ENCODE measurements at regions of chr3 and their contacts with region 1.

Region 1: GRCh38 chr3:45656575-45657363 is 32.4 kb upstream of the SACM1L start:
- DNase-seq: peak; percentile 86 to 96 (median 88)
- ATAC-seq: peak; percentile 95
- H3K4me3 ChIP-seq: no peak overlapping the region
- H3K27ac ChIP-seq: no peak overlapping the region
- H3K4me1 ChIP-seq: 0 out of 5 replicates have a peak, but pooled peaks cover 0 to 3% of the 10 kb centered on the region in 2 experiments
- H3K27me3 ChIP-seq: no peaks in the 10 kb centered on the region
- CTCF ChIP-seq: peak; percentile 96 to 99 (median 98)
- EP300 ChIP-seq: no peak
- POLR2A ChIP-seq: no peak
- RAD21 ChIP-seq: peak; percentile 96 to 98

Region 2: DNA sequence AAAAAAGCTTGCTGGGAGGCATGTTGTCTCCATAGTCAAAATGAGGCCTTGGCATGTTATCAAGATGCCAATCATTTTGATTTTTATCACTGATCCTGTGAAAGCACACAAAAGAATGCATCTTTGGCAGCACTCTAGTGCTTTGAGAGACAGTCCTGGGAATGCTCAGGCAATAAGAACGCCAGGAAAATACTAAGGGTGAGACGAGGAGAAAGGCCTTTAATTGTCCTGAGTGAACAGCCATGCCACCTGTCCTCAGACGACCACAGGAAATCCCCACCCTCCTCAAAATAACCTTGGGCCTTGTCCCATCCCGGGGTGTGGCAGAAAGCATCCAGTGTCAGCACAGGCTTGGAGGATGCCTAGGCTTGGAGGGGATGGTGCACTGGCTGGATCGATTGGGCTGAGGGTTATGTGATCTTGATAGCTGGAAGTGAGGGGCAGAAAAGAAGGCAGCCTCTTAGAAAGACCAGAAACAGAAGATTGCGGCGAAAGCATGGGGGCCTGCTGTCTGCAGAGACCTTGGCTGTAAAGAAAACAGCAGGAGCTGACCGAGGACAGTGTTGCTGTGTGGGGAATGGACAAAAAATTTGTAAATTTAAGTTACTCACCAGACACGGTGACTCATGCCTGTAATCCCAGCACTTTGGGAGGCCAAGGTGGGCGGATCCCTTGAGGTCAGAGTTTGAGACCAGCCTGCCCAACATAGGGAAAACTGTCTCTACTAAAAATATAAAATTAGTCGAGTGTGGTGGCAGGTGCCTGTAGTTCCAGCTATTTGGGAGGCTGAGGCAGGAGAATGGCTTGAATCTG is 438.0 kb before region 1 on chr3:
- CTCF ChIA-PET with region 1: no interaction called
- POLR2A ChIA-PET with region 1: no interaction called
- in situ Hi-C with region 1: loop called (anchors 5 kb)
- intact Hi-C with region 1: no loop called
- DNase-seq: peak in 2 of 4 experiments; percentile 44 to 71
- ATAC-seq: peak; percentile 66
- H3K4me3 ChIP-seq: no peak overlapping the region
- H3K27ac ChIP-seq: no peak overlapping the region
- H3K4me1 ChIP-seq: peaks cover 4 to 11% of the 10 kb centered on the region in 2 experiments; a peak in 3 of 5 replicates
- H3K27me3 ChIP-seq: no peaks in the 10 kb centered on the region
- CTCF ChIP-seq: no peak
- EP300 ChIP-seq: no peak
- POLR2A ChIP-seq: no peak
- RAD21 ChIP-seq: no peak

Region 3: DNA sequence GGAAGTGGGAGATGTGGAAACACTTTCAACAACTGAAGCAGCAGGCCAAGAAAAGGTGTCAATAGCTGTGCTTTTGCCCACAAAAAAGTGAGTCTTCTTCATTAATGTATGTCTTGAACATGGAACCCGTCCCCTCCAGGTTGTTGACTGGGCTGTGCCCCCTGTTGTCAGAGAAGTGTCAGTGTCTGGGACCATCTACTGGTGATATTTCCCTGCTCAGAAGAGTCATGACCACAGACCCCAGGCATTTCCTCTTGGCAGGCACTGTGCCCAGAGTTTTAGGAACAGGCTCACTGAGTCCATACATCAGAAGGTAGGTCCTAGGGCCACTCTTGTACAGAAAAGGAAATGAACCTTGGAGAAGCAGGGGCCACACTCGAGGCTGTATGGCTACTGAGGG is 323.2 kb before region 1 on chr3:
- CTCF ChIA-PET with region 1: no interaction called
- POLR2A ChIA-PET with region 1: interaction called, 3 read pairs
- in situ Hi-C with region 1: no loop called
- intact Hi-C with region 1: loop called (anchors 10 kb)
- DNase-seq: peak in 2 of 4 experiments; percentile 41 to 49
- ATAC-seq: peak; percentile 81
- H3K4me3 ChIP-seq: no peak overlapping the region
- H3K27ac ChIP-seq: no peak overlapping the region
- H3K4me1 ChIP-seq: peaks cover 0 to 2% of the 10 kb centered on the region in 2 experiments; a peak in 2 of 5 replicates
- H3K27me3 ChIP-seq: peaks cover 47 to 72% of the 10 kb centered on the region in 2 experiments
- CTCF ChIP-seq: peak; percentile 49 to 62 (median 55)
- EP300 ChIP-seq: no peak
- POLR2A ChIP-seq: no peak
- RAD21 ChIP-seq: peak; percentile 24 to 63; a peak in 2 of 4 replicates

Region 4: GRCh38 chr3:45546716-45547701 is 109.8 kb before region 1 on chr3:
- CTCF ChIA-PET with region 1: interaction called, 3 read pairs
- POLR2A ChIA-PET with region 1: interaction called, 4 read pairs
- in situ Hi-C with region 1: no loop called
- intact Hi-C with region 1: loop called (anchors 2 kb)
- DNase-seq: peak; percentile 74 to 86 (median 78)
- ATAC-seq: peak; percentile 52
- H3K4me3 ChIP-seq: no peak overlapping the region
- H3K27ac ChIP-seq: peak overlapping the region; percentile 74; the same call in 2 of the 3 replicates
- H3K4me1 ChIP-seq: peaks cover 25 to 51% of the 10 kb centered on the region in 2 experiments
- H3K27me3 ChIP-seq: no peaks in the 10 kb centered on the region
- CTCF ChIP-seq: peak; percentile 75 to 92 (median 85)
- EP300 ChIP-seq: no peak
- POLR2A ChIP-seq: no peak
- RAD21 ChIP-seq: peak in 1 of 2 experiments; percentile 66; a peak in 2 of 4 replicates

Region 5: DNA sequence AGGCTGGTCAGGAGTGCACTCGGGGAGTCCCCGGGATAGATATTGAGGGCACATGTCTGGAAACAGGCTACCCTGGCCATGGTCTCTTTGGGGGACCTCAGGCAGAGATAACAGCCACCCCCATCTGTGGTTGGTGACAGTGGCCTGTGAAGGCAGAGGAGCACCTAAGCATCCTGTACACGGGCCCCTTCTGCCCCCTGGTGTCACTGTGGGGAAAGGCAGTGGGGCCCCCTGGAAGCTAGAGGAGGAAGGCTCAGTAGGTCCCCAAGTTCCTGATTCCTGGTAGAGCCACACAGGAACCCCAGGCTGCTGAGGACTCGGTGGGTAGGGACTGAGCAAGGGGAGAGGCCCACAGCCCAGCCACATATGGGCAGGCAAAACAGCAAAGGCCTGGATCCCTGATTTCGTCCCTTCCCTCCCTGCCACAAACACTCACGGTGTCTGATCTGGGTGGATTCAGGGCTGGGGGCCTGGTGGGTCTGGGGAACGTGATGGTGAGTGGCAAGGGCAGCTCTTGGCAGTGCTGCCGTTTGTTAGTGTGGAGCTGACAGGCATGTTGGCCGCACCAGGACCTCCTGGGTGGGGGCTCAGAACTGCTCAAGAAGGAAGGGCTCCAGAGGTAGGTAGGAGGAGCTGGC is 272.4 kb after region 1 on chr3:
- CTCF ChIA-PET with region 1: no interaction called
- POLR2A ChIA-PET with region 1: no interaction called
- in situ Hi-C with region 1: no loop called
- intact Hi-C with region 1: loop called (anchors 10 kb)
- DNase-seq: peak; percentile 70 to 85 (median 80)
- ATAC-seq: peak; percentile 99
- H3K4me3 ChIP-seq: no peak overlapping the region
- H3K27ac ChIP-seq: no peak overlapping the region
- H3K4me1 ChIP-seq: no peaks in the 10 kb centered on the region
- H3K27me3 ChIP-seq: no peaks in the 10 kb centered on the region
- CTCF ChIP-seq: peak; percentile 86 to 93 (median 91)
- EP300 ChIP-seq: no peak
- POLR2A ChIP-seq: no peak
- RAD21 ChIP-seq: peak; percentile 88 to 89